Activated T-helper 2 cell treated with anti-CD3 and anti-CD28 coated beads, Interferon-gamma antibody, Interleukin-2, Interleukin-4, amounts not matched to agents 10 μg/mL and 5 μg/mL and 100 μg/mL, durations not matched to agents 14 hours and 24 hours and 36 hours (primary cell): ENCODE measurements at regions of chrX and their contacts with region 1.

Region 1: GRCh38 chrX:66728818-66729271 is 90.0 kb upstream of the EDA2R start:
- DNase-seq: peak; percentile 32
- H3K4me3 Mint-ChIP-seq: peak overlapping the region; percentile 92
- H3K27ac Mint-ChIP-seq: peak overlapping the region; percentile 90
- H3K4me1 Mint-ChIP-seq: peaks cover 2% of the 10 kb centered on the region
- H3K27me3 Mint-ChIP-seq: no peaks in the 10 kb centered on the region

Region 2: DNA sequence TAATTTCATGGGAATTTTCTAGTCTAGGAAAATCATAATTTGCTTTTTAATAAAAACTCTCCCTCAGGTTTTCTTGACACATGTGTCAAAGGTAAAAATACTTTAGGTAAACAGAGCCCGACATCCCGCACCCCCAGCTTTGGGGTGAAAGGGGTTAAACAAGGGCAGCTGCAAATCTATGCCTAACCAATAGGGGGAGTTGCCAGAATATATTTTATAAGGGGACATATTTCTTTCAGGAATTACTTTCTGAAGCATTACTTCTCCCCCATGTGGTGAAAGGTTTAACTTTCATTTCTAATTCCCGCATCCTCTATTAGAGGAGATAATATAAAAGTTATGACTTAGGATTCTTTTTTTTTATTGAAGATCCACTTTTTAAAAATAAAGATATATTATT is 618.7 kb before region 1 on chrX:
- intact Hi-C with region 1: loop called (anchors 5 kb)
- DNase-seq: no peak
- H3K4me3 Mint-ChIP-seq: no peak overlapping the region
- H3K27ac Mint-ChIP-seq: no peak overlapping the region
- H3K4me1 Mint-ChIP-seq: peaks cover 6% of the 10 kb centered on the region
- H3K27me3 Mint-ChIP-seq: no peaks in the 10 kb centered on the region

Region 3: GRCh38 chrX:66200855-66201795 is 527.7 kb before region 1 on chrX:
- intact Hi-C with region 1: loop called (anchors 2 kb)
- DNase-seq: no peak
- H3K4me3 Mint-ChIP-seq: no peak overlapping the region
- H3K27ac Mint-ChIP-seq: peak overlapping the region; percentile 60
- H3K4me1 Mint-ChIP-seq: peaks cover 23% of the 10 kb centered on the region
- H3K27me3 Mint-ChIP-seq: no peaks in the 10 kb centered on the region

Region 4: GRCh38 chrX:66889418-66889817 is 160.6 kb after region 1 on chrX:
- intact Hi-C with region 1: no loop called
- DNase-seq: no peak
- H3K4me3 Mint-ChIP-seq: no peak overlapping the region
- H3K27ac Mint-ChIP-seq: no peak overlapping the region
- H3K4me1 Mint-ChIP-seq: no peaks in the 10 kb centered on the region
- H3K27me3 Mint-ChIP-seq: no peaks in the 10 kb centered on the region